ENCODE measurements at regions of chr5 and their contacts with region 1.

Region 1: DNA sequence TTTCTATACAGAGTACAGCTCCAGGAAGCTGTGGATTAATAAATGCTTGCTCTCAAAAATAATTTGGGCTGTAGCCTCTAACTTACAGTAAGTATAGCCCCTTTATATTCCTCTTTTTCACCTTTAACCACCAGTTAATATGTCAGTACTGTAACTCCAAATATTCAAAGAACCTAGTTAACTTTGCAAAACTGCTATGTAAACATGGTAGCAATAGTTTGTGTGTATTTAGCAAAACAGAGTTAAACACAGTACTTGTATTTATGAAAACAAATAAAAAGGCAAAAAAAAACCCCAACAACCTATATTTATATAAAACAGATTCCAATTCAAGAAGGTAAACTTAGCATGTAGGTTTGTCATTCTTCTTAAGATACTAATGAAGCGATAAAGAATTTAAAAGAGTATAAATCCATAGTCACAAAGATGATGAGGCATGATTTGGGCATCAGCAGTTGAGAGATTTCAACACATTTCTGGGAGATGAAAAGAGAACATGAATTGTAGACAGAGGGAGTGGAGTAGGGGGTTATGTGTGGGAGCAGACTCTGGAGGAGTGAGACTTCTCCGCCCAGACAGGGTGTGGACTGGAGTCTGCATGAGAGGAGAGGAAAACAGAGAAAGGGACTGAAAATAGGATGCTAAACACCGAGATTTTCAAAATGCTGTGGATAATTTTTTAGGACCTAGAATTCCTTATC is 47.0 kb upstream of the F2RL1 start:
- DNase-seq: no peak
- ATAC-seq: no peak
- H3K4me3 ChIP-seq: no peak overlapping the region
- H3K4me3 Mint-ChIP-seq: no peak overlapping the region
- H3K27ac ChIP-seq: no peak overlapping the region
- H3K27ac Mint-ChIP-seq: no peak overlapping the region
- H3K4me1 ChIP-seq: peaks cover 3% of the 10 kb centered on the region
- H3K4me1 Mint-ChIP-seq: peaks cover 5% of the 10 kb centered on the region
- H3K27me3 ChIP-seq: no peaks in the 10 kb centered on the region
- H3K27me3 Mint-ChIP-seq: no peaks in the 10 kb centered on the region
- CTCF ChIP-seq: no peak

Region 2: DNA sequence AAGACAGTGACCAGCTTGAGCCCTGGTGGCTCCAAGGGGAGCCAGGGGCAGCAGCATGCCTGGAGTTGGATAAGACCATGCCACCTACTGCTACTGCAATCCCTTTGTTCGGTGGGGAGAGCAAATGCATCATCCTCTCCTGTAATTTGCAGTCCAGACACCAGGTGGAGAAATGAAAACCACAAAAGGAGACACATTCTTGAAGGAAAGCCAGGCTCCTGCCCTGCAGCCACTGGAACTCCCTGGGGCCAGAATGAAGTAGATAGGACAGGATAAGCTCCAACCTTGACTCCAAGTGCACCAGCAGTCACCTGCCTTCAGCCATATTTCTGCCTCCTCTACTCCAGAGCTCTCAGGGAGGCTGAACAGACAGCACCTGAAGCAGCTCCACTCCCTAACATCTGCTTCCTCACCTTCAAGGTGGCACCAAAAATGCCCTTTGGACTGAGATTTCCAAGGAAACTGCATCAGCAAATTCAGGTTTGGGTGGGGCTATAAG is 433.9 kb before region 1 on chr5:
- CTCF ChIA-PET with region 1: no interaction called
- POLR2A ChIA-PET with region 1: no interaction called
- intact Hi-C with region 1: loop called in 1 of 2 experiments (anchors 5 kb)
- DNase-seq: peak in 12 of 14 experiments; percentile 8 to 80 (median 25)
- ATAC-seq: peak; percentile 82
- H3K4me3 ChIP-seq: no peak overlapping the region
- H3K4me3 Mint-ChIP-seq: no peak overlapping the region
- H3K27ac ChIP-seq: no peak overlapping the region
- H3K27ac Mint-ChIP-seq: no peak overlapping the region
- H3K4me1 ChIP-seq: peaks cover 23% of the 10 kb centered on the region
- H3K4me1 Mint-ChIP-seq: peaks cover 38% of the 10 kb centered on the region
- H3K27me3 ChIP-seq: no peaks in the 10 kb centered on the region
- H3K27me3 Mint-ChIP-seq: no peaks in the 10 kb centered on the region
- CTCF ChIP-seq: peak; percentile 72

Region 3: DNA sequence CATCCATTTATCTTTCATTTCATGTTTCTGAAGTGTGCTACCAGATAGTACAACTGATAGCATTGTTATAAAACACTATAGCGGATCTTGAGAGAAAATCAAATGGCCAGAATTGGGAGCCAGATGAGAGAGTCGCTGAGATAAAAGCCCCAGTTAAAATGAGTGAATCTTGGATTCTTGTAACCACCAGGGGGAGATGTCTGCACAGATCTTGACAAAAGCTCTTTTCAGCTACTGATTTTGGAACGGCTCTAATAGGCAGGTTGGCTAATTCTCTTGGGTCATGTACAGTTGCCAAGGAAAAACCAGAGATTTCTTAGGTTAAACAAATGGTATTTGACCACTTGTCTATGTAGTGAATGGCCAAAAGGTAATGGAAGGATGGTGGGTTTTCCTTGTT is 170.4 kb before region 1 on chr5:
- CTCF ChIA-PET with region 1: interaction called, 14 read pairs
- POLR2A ChIA-PET with region 1: interaction called, 3 read pairs
- intact Hi-C with region 1: loop called (anchors 1 kb)
- DNase-seq: peak in 5 of 14 experiments; percentile 5 to 73 (median 68)
- ATAC-seq: peak; percentile 74
- H3K4me3 ChIP-seq: no peak overlapping the region
- H3K4me3 Mint-ChIP-seq: no peak overlapping the region
- H3K27ac ChIP-seq: no peak overlapping the region
- H3K27ac Mint-ChIP-seq: no peak overlapping the region
- H3K4me1 ChIP-seq: no peaks in the 10 kb centered on the region
- H3K4me1 Mint-ChIP-seq: peaks cover 6% of the 10 kb centered on the region
- H3K27me3 ChIP-seq: no peaks in the 10 kb centered on the region
- H3K27me3 Mint-ChIP-seq: no peaks in the 10 kb centered on the region
- CTCF ChIP-seq: peak; percentile 71

Region 4: DNA sequence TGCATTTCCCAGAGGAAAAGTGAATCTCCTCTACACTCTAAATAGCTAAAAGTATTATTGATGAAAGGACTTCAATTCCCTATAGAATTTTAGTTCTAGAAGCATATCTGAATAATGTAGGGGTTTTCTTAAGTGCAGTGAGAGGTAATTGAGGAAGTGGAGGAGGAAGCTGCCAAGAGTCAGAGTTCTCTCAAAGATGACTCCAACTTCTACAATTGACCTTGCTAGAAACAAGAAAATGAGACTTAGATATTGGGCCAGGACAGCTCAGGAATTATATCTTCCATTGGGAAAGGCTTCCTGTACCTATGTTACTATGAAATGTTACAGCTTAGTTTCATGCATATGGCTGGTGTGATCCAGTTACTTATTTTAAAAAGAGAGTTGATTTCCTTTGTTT is 66.3 kb before region 1 on chr5:
- CTCF ChIA-PET with region 1: interaction called, 12 read pairs
- POLR2A ChIA-PET with region 1: interaction called, 4 read pairs
- intact Hi-C with region 1: no loop called
- DNase-seq: peak in 1 of 14 experiments; percentile 4
- ATAC-seq: no peak
- H3K4me3 ChIP-seq: no peak overlapping the region
- H3K4me3 Mint-ChIP-seq: no peak overlapping the region
- H3K27ac ChIP-seq: no peak overlapping the region
- H3K27ac Mint-ChIP-seq: no peak overlapping the region
- H3K4me1 ChIP-seq: no peaks in the 10 kb centered on the region
- H3K4me1 Mint-ChIP-seq: no peaks in the 10 kb centered on the region
- H3K27me3 ChIP-seq: no peaks in the 10 kb centered on the region
- H3K27me3 Mint-ChIP-seq: no peaks in the 10 kb centered on the region
- CTCF ChIP-seq: no peak

Region 5: DNA sequence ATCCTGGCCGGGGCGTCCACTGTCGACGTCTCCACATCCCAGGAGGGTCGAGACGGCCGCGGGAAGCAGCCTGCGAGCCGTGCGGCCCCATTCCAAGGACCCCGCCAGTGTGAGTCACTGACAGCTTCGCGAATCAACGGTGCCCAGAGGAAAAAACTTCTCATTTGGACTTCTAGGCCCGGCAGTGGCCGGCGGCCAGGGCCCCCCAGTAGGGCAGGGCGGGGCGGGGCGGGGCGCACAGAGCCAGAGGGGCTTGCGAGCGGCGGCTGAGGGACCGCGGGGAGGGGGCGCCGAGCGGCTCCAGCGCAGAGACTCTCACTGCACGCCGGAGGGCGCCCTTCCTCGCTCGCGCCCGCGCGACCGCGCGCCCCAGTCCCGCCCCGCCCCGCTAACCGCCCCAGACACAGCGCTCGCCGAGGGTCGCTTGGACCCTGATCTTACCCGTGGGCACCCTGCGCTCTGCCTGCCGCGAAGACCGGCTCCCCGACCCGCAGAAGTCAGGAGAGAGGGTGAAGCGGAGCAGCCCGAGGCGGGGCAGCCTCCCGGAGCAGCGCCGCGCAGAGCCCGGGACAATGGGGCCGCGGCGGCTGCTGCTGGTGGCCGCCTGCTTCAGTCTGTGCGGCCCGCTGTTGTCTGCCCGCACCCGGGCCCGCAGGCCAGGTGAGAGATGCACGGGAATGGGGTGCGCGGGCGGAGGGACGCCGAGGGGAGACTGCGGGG is 56.0 kb before region 1 on chr5 and contains the start of gene F2R:
- CTCF ChIA-PET with region 1: interaction called, 18 read pairs
- POLR2A ChIA-PET with region 1: interaction called, 9 read pairs
- intact Hi-C with region 1: loop called (anchors 1 kb)
- DNase-seq: peak in 13 of 14 experiments; percentile 28 to 79 (median 47)
- ATAC-seq: peak; percentile 79
- H3K4me3 ChIP-seq: peak within 1 kb of the TSS; percentile 65
- H3K4me3 Mint-ChIP-seq: peak within 1 kb of the TSS; percentile 77
- H3K27ac ChIP-seq: no peak within 1 kb of the TSS
- H3K27ac Mint-ChIP-seq: no peak within 1 kb of the TSS
- H3K4me1 ChIP-seq: peaks cover 29% of the 10 kb centered on the region
- H3K4me1 Mint-ChIP-seq: peaks cover 20% of the 10 kb centered on the region
- H3K27me3 ChIP-seq: peaks cover 18% of the 10 kb centered on the region in 2 experiments
- H3K27me3 Mint-ChIP-seq: peaks cover 54% of the 10 kb centered on the region
- CTCF ChIP-seq: peak; percentile 40
- total RNA-seq, gene F2R: 1.9 to 2.7 TPM

Region 6: GRCh38 chr5:76736679-76737556 is 34.9 kb before region 1 on chr5:
- CTCF ChIA-PET with region 1: interaction called, 14 read pairs
- POLR2A ChIA-PET with region 1: interaction called, 4 read pairs
- intact Hi-C with region 1: no loop called
- DNase-seq: peak in 3 of 14 experiments; percentile 16 to 62 (median 23)
- ATAC-seq: no peak
- H3K4me3 ChIP-seq: no peak overlapping the region
- H3K4me3 Mint-ChIP-seq: no peak overlapping the region
- H3K27ac ChIP-seq: no peak overlapping the region
- H3K27ac Mint-ChIP-seq: no peak overlapping the region
- H3K4me1 ChIP-seq: peaks cover 47% of the 10 kb centered on the region
- H3K4me1 Mint-ChIP-seq: peaks cover 33% of the 10 kb centered on the region
- H3K27me3 ChIP-seq: no peaks in the 10 kb centered on the region
- H3K27me3 Mint-ChIP-seq: no peaks in the 10 kb centered on the region
- CTCF ChIP-seq: no peak

Region 7: GRCh38 chr5:76790632-76791290 is 18.9 kb after region 1 on chr5:
- CTCF ChIA-PET with region 1: interaction called, 13 read pairs
- POLR2A ChIA-PET with region 1: no interaction called
- intact Hi-C with region 1: no loop called
- DNase-seq: peak in 10 of 14 experiments; percentile 5 to 45 (median 11)
- ATAC-seq: peak; percentile 89
- H3K4me3 ChIP-seq: no peak overlapping the region
- H3K4me3 Mint-ChIP-seq: no peak overlapping the region
- H3K27ac ChIP-seq: no peak overlapping the region
- H3K27ac Mint-ChIP-seq: peak overlapping the region; percentile 86
- H3K4me1 ChIP-seq: peaks cover 10% of the 10 kb centered on the region
- H3K4me1 Mint-ChIP-seq: peaks cover 16% of the 10 kb centered on the region
- H3K27me3 ChIP-seq: no peaks in the 10 kb centered on the region
- H3K27me3 Mint-ChIP-seq: no peaks in the 10 kb centered on the region
- CTCF ChIP-seq: no peak

Region 8: DNA sequence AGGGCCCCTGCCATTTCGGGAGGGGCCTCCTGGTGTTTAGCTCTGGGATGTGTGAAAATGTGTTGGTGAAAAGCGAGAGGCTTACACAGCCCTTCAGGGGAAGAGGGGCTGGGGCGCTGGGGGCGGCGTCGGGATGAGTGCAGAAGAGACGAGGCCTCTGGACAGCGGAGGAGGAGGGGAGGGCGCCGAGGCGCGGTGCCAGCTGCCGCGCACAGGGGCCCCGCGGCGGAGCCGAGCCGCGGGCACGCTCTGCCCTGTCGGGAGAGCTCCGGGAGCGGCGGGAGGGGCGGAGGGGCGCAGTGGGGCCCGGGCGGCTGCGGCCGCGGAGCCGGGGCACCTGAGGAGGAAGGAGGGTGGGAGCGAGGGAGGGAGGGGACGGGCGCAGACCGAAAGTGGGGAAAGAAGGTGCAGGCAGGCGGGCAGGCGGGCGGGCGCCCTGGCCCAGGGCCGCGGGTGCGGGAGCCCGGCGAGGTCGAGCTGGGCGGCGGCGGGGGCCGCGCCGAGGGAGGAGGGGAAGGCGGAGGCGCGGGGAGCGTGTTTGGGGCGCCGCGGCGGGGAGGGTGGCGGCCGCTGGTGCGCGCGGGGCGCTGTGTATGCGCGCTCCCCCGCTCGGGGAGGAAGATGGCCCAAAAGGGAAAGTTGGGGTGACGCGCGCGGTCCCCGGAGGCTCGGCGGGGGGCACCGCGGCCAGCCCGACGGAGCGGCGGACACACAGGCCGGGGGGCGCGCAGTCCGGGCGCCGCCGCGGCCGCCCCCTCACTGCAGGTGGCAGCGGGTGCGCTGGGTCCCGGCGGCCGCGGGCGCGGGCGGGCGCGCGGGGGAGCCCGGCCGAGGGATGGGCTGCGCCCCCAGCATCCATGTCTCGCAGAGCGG is 438.5 kb after region 1 on chr5 and contains the start of gene PDE8B:
- CTCF ChIA-PET with region 1: no interaction called
- POLR2A ChIA-PET with region 1: no interaction called
- intact Hi-C with region 1: no loop called
- DNase-seq: peak in 5 of 14 experiments; percentile 9 to 53 (median 34)
- ATAC-seq: peak; percentile 68
- H3K4me3 ChIP-seq: peak within 1 kb of the TSS; percentile 10
- H3K4me3 Mint-ChIP-seq: peak within 1 kb of the TSS; percentile 89
- H3K27ac ChIP-seq: no peak within 1 kb of the TSS
- H3K27ac Mint-ChIP-seq: no peak within 1 kb of the TSS
- H3K4me1 ChIP-seq: peaks cover 10% of the 10 kb centered on the region
- H3K4me1 Mint-ChIP-seq: peaks cover 21% of the 10 kb centered on the region
- H3K27me3 ChIP-seq: peaks cover 26 to 61% of the 10 kb centered on the region in 2 experiments
- H3K27me3 Mint-ChIP-seq: peaks cover 70% of the 10 kb centered on the region
- CTCF ChIP-seq: no peak
- total RNA-seq, gene PDE8B: 0.22 to 0.27 TPM